Natural killer cell (primary cell): ENCODE measurements at regions of chr1 and their contacts with region 1.

Region 1: GRCh38 chr1:64956733-64957441 is 9.5 kb downstream of the JAK1 start:
- DNase-seq: peak in 1 of 2 donors; percentile 59
- ATAC-seq: peak; percentile 57 to 69 (median 61)
- H3K4me3 ChIP-seq: no peak overlapping the region
- H3K4me3 Mint-ChIP-seq: no peak overlapping the region
- H3K27ac ChIP-seq: peak overlapping the region; percentile 59
- H3K27ac Mint-ChIP-seq: no peak overlapping the region
- H3K4me1 ChIP-seq: peaks cover 66% of the 10 kb centered on the region
- H3K4me1 Mint-ChIP-seq: peaks cover 52 to 55% of the 10 kb centered on the region in 2 donors
- H3K27me3 ChIP-seq: no peaks in the 10 kb centered on the region
- H3K27me3 Mint-ChIP-seq: no peaks in the 10 kb centered on the region
- CTCF ChIP-seq: no peak

Region 2: DNA sequence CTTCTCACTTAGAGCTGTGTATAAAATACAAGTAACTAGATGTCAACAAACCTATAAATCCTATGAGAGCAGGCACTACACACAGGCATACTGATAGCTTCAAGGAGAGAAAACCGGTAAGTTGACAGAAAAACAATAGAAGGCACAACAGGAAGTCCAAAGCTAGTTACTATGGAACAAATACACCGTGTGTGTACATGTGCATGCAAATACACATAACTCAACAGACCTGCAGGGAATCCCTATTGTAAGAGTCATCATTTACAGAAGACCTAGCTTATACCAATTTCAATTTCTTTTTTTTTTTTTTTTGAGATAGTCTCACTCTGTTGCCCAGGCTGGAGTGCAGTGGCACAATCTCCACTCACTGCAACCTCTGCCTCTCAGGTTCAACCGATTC is 16.9 kb before region 1 on chr1:
- intact Hi-C with region 1: loop called (anchors 2 kb)
- DNase-seq: no peak
- ATAC-seq: peak in 2 of 3 donors; percentile 40 to 53
- H3K4me3 ChIP-seq: no peak overlapping the region
- H3K4me3 Mint-ChIP-seq: peak overlapping the region; percentile 62
- H3K27ac ChIP-seq: peak overlapping the region; percentile 28
- H3K27ac Mint-ChIP-seq: peak overlapping the region; percentile 61 to 78
- H3K4me1 ChIP-seq: peaks cover 37% of the 10 kb centered on the region
- H3K4me1 Mint-ChIP-seq: peaks cover 77 to 82% of the 10 kb centered on the region in 2 donors
- H3K27me3 ChIP-seq: no peaks in the 10 kb centered on the region
- H3K27me3 Mint-ChIP-seq: no peaks in the 10 kb centered on the region
- CTCF ChIP-seq: no peak

Region 3: DNA sequence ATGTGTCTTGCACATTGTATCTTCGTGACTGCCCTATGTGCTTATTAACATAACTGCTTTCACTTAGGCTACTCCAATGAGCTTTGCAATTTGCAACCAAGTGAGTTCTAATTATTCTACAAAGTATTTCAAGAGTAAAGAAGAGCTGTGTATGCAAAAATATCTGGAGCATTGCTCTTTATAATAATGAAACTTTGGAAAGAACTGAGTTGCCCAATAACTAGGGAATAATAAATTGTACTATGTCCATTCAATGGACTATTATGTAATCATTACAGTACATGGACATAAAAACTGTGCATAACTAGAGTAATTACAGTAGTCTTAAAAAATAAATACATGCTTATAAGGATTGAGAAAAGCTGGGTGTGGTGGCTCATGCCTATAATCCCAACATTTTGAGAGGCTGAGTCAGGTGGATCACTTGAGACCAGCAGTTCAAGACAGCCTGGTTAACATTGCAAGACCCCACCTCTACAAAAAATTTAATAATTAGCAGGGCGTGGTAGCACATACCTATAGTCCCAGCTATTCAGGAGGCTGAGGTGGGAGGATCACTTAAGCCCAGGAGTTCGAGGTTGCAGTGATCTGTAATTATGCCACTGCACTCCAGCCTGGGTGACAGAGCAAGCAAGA is 79.8 kb after region 1 on chr1:
- intact Hi-C with region 1: no loop called
- DNase-seq: no peak
- ATAC-seq: no peak
- H3K4me3 ChIP-seq: no peak overlapping the region
- H3K4me3 Mint-ChIP-seq: no peak overlapping the region
- H3K27ac ChIP-seq: no peak overlapping the region
- H3K27ac Mint-ChIP-seq: no peak overlapping the region
- H3K4me1 ChIP-seq: peaks cover 6% of the 10 kb centered on the region
- H3K4me1 Mint-ChIP-seq: peaks cover 8 to 14% of the 10 kb centered on the region in 2 donors
- H3K27me3 ChIP-seq: no peaks in the 10 kb centered on the region
- H3K27me3 Mint-ChIP-seq: no peaks in the 10 kb centered on the region
- CTCF ChIP-seq: no peak